B cell (primary cell): ENCODE measurements at regions of chr6 and their contacts with region 1.

Region 1: DNA sequence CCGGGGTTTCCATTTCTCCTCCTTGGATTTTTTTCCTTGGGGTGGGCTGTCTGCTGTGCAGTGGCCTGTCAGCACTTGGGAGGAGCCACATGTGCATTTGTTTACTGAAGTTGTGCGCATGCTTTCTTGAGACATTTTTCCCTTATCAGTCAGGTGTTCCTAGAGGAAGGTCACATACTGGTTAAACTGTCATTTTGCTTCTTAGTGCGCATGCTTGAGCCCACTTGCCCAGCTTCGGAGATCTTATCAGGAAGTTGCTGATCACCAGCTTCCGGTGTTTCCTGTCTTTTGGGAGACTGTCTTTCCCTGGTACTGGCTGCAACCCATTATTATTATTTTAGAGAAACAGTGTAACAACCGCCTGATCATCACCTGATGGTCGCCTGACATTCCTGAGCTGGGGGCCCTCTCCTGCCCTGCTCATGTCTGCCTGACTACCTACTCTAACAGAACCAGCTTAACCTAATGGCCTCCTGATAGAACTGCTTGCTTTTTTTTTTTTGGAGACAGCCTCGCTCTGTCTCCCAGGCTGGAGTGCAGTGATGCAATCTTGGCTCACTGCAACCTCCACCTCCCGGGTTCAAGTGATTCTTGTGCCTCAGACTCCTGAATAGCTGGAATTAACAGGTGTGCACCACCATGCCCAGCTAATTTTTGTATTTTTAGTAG is 378 bp upstream of the ERVFRD-1 start:
- DNase-seq: no peak
- ATAC-seq: no peak
- H3K4me3 ChIP-seq: peak overlapping the region in 1 of 5 experiments; percentile 15
- H3K4me3 Mint-ChIP-seq: no peak overlapping the region
- H3K27ac ChIP-seq: no peak overlapping the region
- H3K27ac Mint-ChIP-seq: no peak overlapping the region
- H3K4me1 ChIP-seq: no peaks in the 10 kb centered on the region
- H3K4me1 Mint-ChIP-seq: peaks cover 17% of the 10 kb centered on the region
- H3K27me3 ChIP-seq: no peaks in the 10 kb centered on the region
- H3K27me3 Mint-ChIP-seq: no peaks in the 10 kb centered on the region
- CTCF ChIP-seq: no peak

Region 2: DNA sequence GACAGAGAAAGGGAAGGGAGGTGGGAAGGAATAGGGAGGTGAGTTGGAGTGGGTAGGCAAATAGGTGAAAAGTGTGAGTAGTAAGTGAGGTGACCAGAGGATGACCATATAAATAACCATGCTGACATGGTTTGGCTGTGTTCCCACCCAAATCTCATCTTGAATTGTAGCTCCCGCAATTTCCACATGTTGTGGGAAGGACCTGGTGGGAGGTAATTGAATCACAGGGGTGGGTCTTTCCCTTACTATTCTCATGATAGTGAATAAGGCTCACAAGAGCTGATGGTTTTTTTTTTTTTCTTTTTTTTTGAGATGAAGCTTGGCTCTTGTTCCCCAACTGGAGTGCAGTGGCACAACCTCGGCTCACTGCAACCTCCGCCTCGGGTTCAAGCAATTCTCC is 39.8 kb before region 1 on chr6:
- CTCF ChIA-PET with region 1: interaction called, 10 read pairs
- POLR2A ChIA-PET with region 1: no interaction called
- intact Hi-C with region 1: no loop called
- DNase-seq: no peak
- ATAC-seq: no peak
- H3K4me3 ChIP-seq: no peak overlapping the region
- H3K4me3 Mint-ChIP-seq: no peak overlapping the region
- H3K27ac ChIP-seq: no peak overlapping the region
- H3K27ac Mint-ChIP-seq: no peak overlapping the region
- H3K4me1 ChIP-seq: no peaks in the 10 kb centered on the region
- H3K4me1 Mint-ChIP-seq: no peaks in the 10 kb centered on the region
- H3K27me3 ChIP-seq: no peaks in the 10 kb centered on the region
- H3K27me3 Mint-ChIP-seq: no peaks in the 10 kb centered on the region
- CTCF ChIP-seq: no peak